PC-9 (cell line): ENCODE measurements at regions of chr10 and their contacts with region 1.

Region 1: GRCh38 chr10:29857843-29858701 is 201.3 kb downstream of the JCAD start:
- DNase-seq: peak; percentile 79
- H3K4me3 ChIP-seq: no peak overlapping the region
- H3K27ac ChIP-seq: peak overlapping the region; percentile 60
- H3K4me1 ChIP-seq: peaks cover 35% of the 10 kb centered on the region
- H3K27me3 ChIP-seq: no peaks in the 10 kb centered on the region
- CTCF ChIP-seq: peak; percentile 73

Region 2: GRCh38 chr10:29590915-29591650 is 267.0 kb before region 1 on chr10:
- CTCF ChIA-PET with region 1: no interaction called
- POLR2A ChIA-PET with region 1: no interaction called
- intact Hi-C with region 1: loop called (anchors 1 kb)
- DNase-seq: no peak
- H3K4me3 ChIP-seq: no peak overlapping the region; the same call in 1 of the 2 replicates
- H3K27ac ChIP-seq: peak overlapping the region; percentile 99
- H3K4me1 ChIP-seq: peaks cover 49% of the 10 kb centered on the region
- H3K27me3 ChIP-seq: no peaks in the 10 kb centered on the region
- CTCF ChIP-seq: peak; percentile 28; the same call in 1 of the 2 replicates

Region 3: DNA sequence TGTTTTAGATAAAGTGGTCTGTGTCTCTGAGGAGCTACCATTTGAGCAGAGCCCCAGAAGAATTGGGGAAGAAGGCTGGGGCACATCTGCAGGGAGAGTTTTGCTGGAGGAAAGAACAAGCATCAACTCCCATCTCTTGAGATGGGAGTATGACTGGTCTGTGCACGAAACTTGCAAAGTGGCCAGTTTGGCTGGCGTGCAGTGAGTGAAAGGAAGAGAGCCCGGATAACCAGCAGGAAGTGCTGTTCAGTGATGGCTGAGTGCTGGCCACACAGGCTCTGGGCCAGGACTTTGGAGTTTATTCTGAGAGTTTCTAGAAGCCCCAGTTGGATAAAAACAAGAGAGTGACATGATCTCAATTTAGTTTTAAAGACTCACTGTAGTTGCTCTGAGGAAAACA is 188.9 kb before region 1 on chr10:
- CTCF ChIA-PET with region 1: no interaction called
- POLR2A ChIA-PET with region 1: interaction called, 8 read pairs
- intact Hi-C with region 1: loop called (anchors 1 kb)
- DNase-seq: no peak
- H3K4me3 ChIP-seq: no peak overlapping the region
- H3K27ac ChIP-seq: peak overlapping the region; percentile 62
- H3K4me1 ChIP-seq: peaks cover 29% of the 10 kb centered on the region
- H3K27me3 ChIP-seq: no peaks in the 10 kb centered on the region
- CTCF ChIP-seq: no peak

Region 4: GRCh38 chr10:29735596-29736318 is 122.3 kb before region 1 on chr10:
- CTCF ChIA-PET with region 1: interaction called, 5 read pairs
- POLR2A ChIA-PET with region 1: interaction called, 6 read pairs
- intact Hi-C with region 1: loop called (anchors 1 kb)
- DNase-seq: peak; percentile 64 to 97
- H3K4me3 ChIP-seq: peak overlapping the region; percentile 73
- H3K27ac ChIP-seq: peak overlapping the region; percentile 93
- H3K4me1 ChIP-seq: peaks cover 22% of the 10 kb centered on the region
- H3K27me3 ChIP-seq: no peaks in the 10 kb centered on the region
- CTCF ChIP-seq: peak; percentile 84

Region 5: GRCh38 chr10:29804025-29804852 is 53.8 kb before region 1 on chr10:
- CTCF ChIA-PET with region 1: no interaction called
- POLR2A ChIA-PET with region 1: interaction called, 8 read pairs
- intact Hi-C with region 1: loop called (anchors 1 kb)
- DNase-seq: peak; percentile 86 to 96
- H3K4me3 ChIP-seq: peak overlapping the region; percentile 38; the same call in 1 of the 2 replicates
- H3K27ac ChIP-seq: peak overlapping the region; percentile 100
- H3K4me1 ChIP-seq: peaks cover 69% of the 10 kb centered on the region
- H3K27me3 ChIP-seq: no peaks in the 10 kb centered on the region
- CTCF ChIP-seq: no peak

Region 6: DNA sequence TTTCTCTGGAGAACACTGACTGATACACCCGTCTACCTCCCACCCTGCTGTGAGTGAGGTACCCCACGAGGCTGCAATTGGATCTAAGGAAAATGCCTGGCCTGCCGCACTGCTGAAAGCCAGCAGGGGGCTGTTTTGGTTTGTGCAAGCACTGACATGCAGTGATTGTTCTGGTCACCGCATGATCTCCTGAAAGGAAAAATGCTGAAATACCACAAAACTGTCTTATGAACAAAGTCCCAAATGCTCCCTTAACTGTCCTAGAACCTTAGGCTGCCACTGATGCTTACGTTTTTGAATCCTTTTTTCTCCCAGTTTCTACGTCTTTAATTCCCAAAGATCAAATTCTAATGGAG is 68.6 kb after region 1 on chr10:
- CTCF ChIA-PET with region 1: no interaction called
- POLR2A ChIA-PET with region 1: no interaction called
- intact Hi-C with region 1: no loop called
- DNase-seq: no peak
- H3K4me3 ChIP-seq: no peak overlapping the region
- H3K27ac ChIP-seq: no peak overlapping the region
- H3K4me1 ChIP-seq: no peaks in the 10 kb centered on the region
- H3K27me3 ChIP-seq: no peaks in the 10 kb centered on the region
- CTCF ChIP-seq: peak; percentile 32; the same call in 1 of the 2 replicates

Region 7: DNA sequence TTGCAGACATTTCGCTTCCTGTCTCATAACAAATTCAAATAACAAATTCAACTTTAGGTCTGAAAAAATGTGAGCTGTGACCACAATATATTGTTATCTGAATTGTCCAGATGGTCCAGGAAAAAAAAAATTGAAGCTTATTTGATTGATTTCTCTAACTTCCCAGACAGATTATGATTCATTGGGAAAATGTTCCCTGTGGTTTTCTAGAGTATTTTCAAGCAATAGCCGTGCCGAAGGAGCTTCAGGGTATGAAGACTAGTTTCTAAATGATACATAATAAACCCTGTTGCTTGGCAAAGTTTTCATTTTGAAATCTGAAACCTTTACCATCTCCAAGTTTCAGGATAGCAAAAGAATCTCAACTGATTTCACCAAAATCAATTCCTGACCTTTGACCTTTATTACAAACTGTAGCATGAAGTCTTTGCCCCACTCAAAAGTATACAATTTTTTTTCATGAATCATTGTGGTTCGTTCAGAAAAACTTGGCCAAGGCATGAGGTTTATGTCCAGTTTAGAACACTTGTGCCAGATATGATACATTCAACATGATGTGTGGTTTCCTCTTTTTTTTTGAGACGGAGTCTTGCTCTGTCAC is 91.4 kb after region 1 on chr10:
- CTCF ChIA-PET with region 1: interaction called, 5 read pairs
- POLR2A ChIA-PET with region 1: interaction called, 6 read pairs
- intact Hi-C with region 1: loop called (anchors 1 kb)
- DNase-seq: peak; percentile 44 to 96
- H3K4me3 ChIP-seq: no peak overlapping the region
- H3K27ac ChIP-seq: peak overlapping the region; percentile 91
- H3K4me1 ChIP-seq: peaks cover 51% of the 10 kb centered on the region
- H3K27me3 ChIP-seq: no peaks in the 10 kb centered on the region
- CTCF ChIP-seq: no peak